OCI-LY7 (cell line): ENCODE measurements at regions of chr1 and their contacts with region 1.

Region 1: GRCh38 chr1:92298573-92299476 is at the starts of genes GLMN and RPAP2:
- DNase-seq: peak; percentile 89
- H3K4me3 ChIP-seq: peak within 1 kb of the TSS; percentile 88
- H3K27ac ChIP-seq: peak within 1 kb of the TSS; percentile 56
- H3K4me1 ChIP-seq: peaks cover 18% of the 10 kb centered on the region
- CTCF ChIP-seq: 0 out of 2 replicates have a peak, but pooled peaks have one; percentile 3
- total RNA-seq, gene GLMN: 12.4 and 12.6 TPM in 2 replicates
- total RNA-seq, gene RPAP2: 2.2 and 8.6 TPM in 2 replicates

Region 2: GRCh38 chr1:91500756-91501522 is 797.9 kb before region 1 on chr1 and contains the start of gene CDC7:
- CTCF ChIA-PET with region 1: no interaction called
- POLR2A ChIA-PET with region 1: no interaction called
- intact Hi-C with region 1: loop called (anchors 5 kb)
- DNase-seq: peak; percentile 93
- H3K4me3 ChIP-seq: peak within 1 kb of the TSS; percentile 82
- H3K27ac ChIP-seq: peak within 1 kb of the TSS; percentile 72
- H3K4me1 ChIP-seq: peaks cover 41% of the 10 kb centered on the region
- CTCF ChIP-seq: no peak; the same call in 1 of the 2 replicates
- total RNA-seq, gene CDC7: 28.6 and 35.8 TPM in 2 replicates

Region 3: DNA sequence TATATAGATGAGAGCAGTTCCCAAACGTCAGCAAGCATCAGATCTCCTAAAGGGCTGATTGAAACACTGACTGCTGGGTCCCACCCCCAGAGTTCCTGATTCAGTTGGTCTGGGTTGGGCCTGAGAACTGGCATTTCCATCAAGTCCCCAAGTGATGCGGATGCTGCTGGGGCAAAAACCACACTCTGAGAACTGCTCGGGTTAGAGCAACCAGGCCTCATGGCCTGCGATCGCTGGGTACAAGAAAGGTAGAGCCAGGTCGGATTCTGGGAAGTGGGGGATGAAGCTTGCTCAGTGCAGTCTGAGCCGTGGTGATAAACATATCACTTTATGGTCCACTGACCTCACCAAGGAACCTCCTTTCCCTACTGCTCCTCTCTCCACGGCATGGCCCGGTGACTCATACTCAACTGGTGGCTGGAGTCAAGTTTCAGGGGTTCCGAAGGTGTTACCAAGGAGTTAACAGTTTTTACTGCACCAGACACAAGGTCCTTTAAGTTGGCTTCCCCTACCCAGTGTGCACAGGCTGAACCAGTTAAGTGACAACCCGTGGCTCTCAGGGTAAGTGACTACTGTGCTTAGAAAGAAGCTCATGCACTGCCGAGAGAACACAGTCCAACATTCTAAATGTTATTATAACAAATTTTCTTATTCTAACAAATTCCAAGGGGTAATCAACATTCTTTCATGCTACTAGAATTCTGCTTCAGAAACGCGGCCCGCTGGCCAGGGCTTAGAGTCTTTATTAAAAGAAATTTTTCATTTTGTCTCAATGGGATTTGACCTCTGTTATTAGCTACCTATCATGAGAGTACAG is 566.3 kb before region 1 on chr1:
- CTCF ChIA-PET with region 1: no interaction called
- POLR2A ChIA-PET with region 1: no interaction called
- intact Hi-C with region 1: no loop called
- DNase-seq: no peak
- H3K4me3 ChIP-seq: no peak overlapping the region
- H3K27ac ChIP-seq: no peak overlapping the region
- H3K4me1 ChIP-seq: no peaks in the 10 kb centered on the region
- CTCF ChIP-seq: no peak